ENCODE measurements at regions of chr10 and their contacts with region 1.

Region 1: DNA sequence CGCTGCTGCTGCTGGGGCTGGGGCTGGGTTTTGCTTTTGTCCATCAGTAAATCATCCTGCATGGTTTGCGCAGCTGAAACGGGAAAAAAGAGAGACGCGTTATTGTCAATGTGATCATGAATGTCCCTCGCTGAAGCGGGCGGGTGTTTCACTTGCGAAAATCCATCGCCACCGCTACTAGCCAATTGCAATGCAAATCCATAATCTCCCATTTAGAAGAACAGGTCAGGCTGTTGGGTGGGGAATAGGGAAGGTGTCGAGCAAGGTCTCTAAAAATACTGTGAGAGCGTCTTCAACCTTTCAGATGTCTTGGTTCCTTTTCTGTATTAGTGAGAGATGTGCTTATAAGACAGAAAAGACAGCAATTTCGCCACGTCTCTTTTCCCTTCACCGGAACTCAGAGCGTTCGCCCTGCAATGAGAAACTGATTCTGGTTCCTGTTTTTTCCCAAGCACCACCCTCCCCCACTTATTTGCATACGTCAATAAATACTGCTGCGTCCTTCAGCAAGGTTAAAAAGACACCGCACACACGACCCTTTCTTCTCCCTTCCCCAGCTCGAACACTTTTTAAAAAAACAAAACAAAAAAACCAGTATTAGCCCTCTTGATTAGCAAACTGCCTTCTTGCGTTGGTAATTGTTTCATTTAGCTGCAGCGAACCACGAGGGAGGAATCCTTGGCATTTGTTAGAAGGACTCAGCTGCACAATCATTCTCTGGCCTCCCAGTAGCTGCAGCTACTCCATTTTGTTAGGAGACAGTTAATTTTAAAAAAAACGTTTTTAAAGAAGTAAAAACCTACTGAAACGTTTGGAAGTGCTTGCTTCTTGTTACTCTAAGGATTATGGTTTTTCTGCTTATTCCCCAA is 50.4 kb downstream of the CPEB3 start:
- DNase-seq: peak; percentile 61
- H3K4me3 ChIP-seq: peak overlapping the region; percentile 67 to 81 (median 74)
- H3K27ac ChIP-seq: peak overlapping the region; percentile 50
- H3K4me1 ChIP-seq: peaks cover 27% of the 10 kb centered on the region
- H3K27me3 ChIP-seq: no peaks in the 10 kb centered on the region
- CTCF ChIP-seq: no peak

Region 2: GRCh38 chr10:92103376-92104090 is 137.0 kb before region 1 on chr10:
- CTCF ChIA-PET with region 1: interaction called, 3 read pairs
- dilution Hi-C with region 1: no loop called
- in situ Hi-C with region 1: no loop called
- intact Hi-C with region 1: loop called (anchors 1 kb)
- DNase-seq: no peak
- H3K4me3 ChIP-seq: no peak overlapping the region
- H3K27ac ChIP-seq: no peak overlapping the region
- H3K4me1 ChIP-seq: peaks cover 10% of the 10 kb centered on the region
- H3K27me3 ChIP-seq: no peaks in the 10 kb centered on the region
- CTCF ChIP-seq: no peak

Region 3: GRCh38 chr10:92200564-92200963 is 40.0 kb before region 1 on chr10:
- CTCF ChIA-PET with region 1: no interaction called
- dilution Hi-C with region 1: no loop called
- in situ Hi-C with region 1: no loop called
- intact Hi-C with region 1: loop called (anchors 2 kb)
- DNase-seq: peak; percentile 90
- H3K4me3 ChIP-seq: no peak overlapping the region
- H3K27ac ChIP-seq: no peak overlapping the region
- H3K4me1 ChIP-seq: peaks cover 5% of the 10 kb centered on the region
- H3K27me3 ChIP-seq: no peaks in the 10 kb centered on the region
- CTCF ChIP-seq: no peak

Region 4: GRCh38 chr10:92222603-92223275 is 17.8 kb before region 1 on chr10:
- CTCF ChIA-PET with region 1: interaction called, 3 read pairs
- dilution Hi-C with region 1: no loop called
- in situ Hi-C with region 1: no loop called
- intact Hi-C with region 1: loop called (anchors 1 kb)
- DNase-seq: peak; percentile 77
- H3K4me3 ChIP-seq: peak overlapping the region in 1 of 3 experiments; percentile 8
- H3K27ac ChIP-seq: peak overlapping the region; percentile 44
- H3K4me1 ChIP-seq: peaks cover 21% of the 10 kb centered on the region
- H3K27me3 ChIP-seq: no peaks in the 10 kb centered on the region
- CTCF ChIP-seq: no peak

Region 5: GRCh38 chr10:92432596-92432995 is 192.1 kb after region 1 on chr10:
- CTCF ChIA-PET with region 1: no interaction called
- dilution Hi-C with region 1: no loop called
- in situ Hi-C with region 1: no loop called
- intact Hi-C with region 1: loop called (anchors 10 kb)
- DNase-seq: no peak
- H3K4me3 ChIP-seq: no peak overlapping the region
- H3K27ac ChIP-seq: no peak overlapping the region
- H3K4me1 ChIP-seq: no peaks in the 10 kb centered on the region
- H3K27me3 ChIP-seq: no peaks in the 10 kb centered on the region
- CTCF ChIP-seq: no peak

Measured in mammary epithelial cell (primary cell).